ENCODE measurements at regions of chr9 and their contacts with region 1.

Region 1: GRCh38 chr9:122883125-122883524 is 22.0 kb downstream of the RC3H2 start:
- DNase-seq: no peak
- ATAC-seq: no peak
- H3K4me3 ChIP-seq: no peak overlapping the region
- H3K27ac ChIP-seq: no peak overlapping the region
- H3K4me1 ChIP-seq: no peaks in the 10 kb centered on the region
- CTCF ChIP-seq: no peak
- EP300 ChIP-seq: no peak
- POLR2A ChIP-seq: no peak
- RAD21 ChIP-seq: no peak

Region 2: GRCh38 chr9:122835313-122835731 is 47.8 kb before region 1 on chr9:
- CTCF ChIA-PET with region 1: no interaction called
- POLR2A ChIA-PET with region 1: interaction called, 10 read pairs
- DNase-seq: no peak
- ATAC-seq: peak; percentile 69 to 75; a peak in 4 of 6 replicates
- H3K4me3 ChIP-seq: no peak overlapping the region
- H3K27ac ChIP-seq: no peak overlapping the region
- H3K4me1 ChIP-seq: 0 out of 3 replicates have a peak, but pooled peaks cover 6% of the 10 kb centered on the region
- CTCF ChIP-seq: peak; percentile 14; the same call in 1 of the 3 replicates
- EP300 ChIP-seq: no peak
- POLR2A ChIP-seq: no peak
- RAD21 ChIP-seq: peak in 1 of 2 experiments; percentile 51; a peak in 2 of 5 replicates

Region 3: GRCh38 chr9:122931226-122932121 is 48.3 kb after region 1 on chr9 and contains the start of gene ZBTB26:
- CTCF ChIA-PET with region 1: no interaction called
- POLR2A ChIA-PET with region 1: no interaction called
- DNase-seq: peak; percentile 93 to 99
- ATAC-seq: peak; percentile 99
- H3K4me3 ChIP-seq: peak within 1 kb of the TSS; percentile 81
- H3K27ac ChIP-seq: peak within 1 kb of the TSS; percentile 88 to 96
- H3K4me1 ChIP-seq: peaks cover 19% of the 10 kb centered on the region; the same call in 2 of the 3 replicates
- CTCF ChIP-seq: no peak
- EP300 ChIP-seq: no peak
- POLR2A ChIP-seq: peak; percentile 79
- RAD21 ChIP-seq: no peak
- polyA plus RNA-seq, gene ZBTB26: 9.0 and 9.3 TPM in 2 replicates

Measured in A549 (cell line).